Sciatic nerve (tissue), 2 donors: ENCODE measurements at regions of chr2 and their contacts with region 1.

Region 1: GRCh38 chr2:35281702-35282101 is 1073.9 kb upstream of the CRIM1 start:
- DNase-seq: no peak
- ATAC-seq: no peak

Region 2: DNA sequence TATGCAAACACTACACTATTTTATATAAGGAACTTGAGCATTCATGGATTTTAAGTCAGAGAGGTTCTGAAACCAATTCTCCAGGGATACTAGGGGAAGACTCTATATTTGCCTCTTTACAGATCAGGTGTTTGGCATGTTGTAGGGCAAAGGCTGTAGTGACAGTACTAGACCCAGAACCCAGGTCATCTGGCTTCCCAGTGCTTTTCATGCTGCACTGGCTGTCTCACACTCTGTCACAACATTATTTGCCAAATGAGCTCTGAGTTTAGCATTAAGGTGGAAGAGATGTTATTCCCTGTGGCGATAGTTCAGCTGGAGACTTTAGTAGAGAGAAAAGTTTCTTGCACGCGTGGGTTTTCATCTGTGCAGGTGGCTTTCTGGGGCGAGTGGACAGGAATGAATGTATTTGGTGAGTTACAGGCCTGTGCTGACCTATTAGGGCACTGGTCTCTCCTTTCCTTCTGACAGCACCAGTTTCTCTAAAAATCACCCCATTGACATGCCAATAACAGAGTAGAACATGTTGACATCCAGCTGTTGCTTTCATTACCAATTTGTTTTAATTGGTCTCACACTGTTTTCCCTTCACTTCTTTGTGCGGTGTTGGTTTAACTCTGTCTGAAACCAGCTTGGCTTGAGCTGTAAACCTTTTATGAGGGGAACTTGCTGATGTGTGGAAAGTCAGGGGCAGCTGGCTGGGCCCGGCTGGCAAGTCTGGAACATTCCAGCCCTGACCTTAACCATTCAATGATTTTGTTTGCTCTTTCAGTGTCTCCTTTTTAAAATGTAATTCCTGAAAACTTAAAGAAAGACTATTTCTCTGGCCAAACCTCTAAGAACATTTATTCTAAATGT is 1039.6 kb before region 1 on chr2:
- intact Hi-C with region 1: loop called (anchors 10 kb)
- DNase-seq: no peak
- ATAC-seq: no peak

Region 3: DNA sequence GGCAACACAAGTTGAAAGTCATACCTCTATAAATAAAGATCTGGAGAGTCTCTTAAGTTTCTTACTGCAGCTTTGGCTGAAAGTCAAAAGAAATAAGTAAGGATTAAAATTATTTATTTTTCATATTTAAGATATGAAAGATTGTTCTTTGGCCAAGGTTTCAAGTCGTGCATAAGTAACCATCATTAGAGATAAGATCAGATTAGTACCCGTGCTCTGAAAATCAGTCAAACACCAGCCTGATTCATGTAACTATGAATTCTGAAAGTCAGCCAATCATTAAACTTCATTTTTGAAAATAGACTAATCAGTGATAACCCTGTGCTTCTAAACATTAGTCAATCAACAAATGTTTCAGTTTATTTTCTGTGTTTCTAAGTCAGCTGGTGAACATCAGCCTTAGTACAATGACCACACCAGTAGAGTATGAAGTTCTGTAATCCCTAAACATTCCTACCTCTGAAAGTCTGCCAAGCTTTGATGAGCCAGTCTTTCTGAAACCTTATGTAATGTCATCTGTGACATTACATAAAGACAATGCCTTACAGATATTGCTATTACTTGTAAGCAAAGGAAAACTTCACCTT is 266.4 kb after region 1 on chr2:
- intact Hi-C with region 1: no loop called
- DNase-seq: no peak
- ATAC-seq: no peak